MCF 10A (cell line): ENCODE measurements at regions of chr21 and their contacts with region 1.

Region 1: DNA sequence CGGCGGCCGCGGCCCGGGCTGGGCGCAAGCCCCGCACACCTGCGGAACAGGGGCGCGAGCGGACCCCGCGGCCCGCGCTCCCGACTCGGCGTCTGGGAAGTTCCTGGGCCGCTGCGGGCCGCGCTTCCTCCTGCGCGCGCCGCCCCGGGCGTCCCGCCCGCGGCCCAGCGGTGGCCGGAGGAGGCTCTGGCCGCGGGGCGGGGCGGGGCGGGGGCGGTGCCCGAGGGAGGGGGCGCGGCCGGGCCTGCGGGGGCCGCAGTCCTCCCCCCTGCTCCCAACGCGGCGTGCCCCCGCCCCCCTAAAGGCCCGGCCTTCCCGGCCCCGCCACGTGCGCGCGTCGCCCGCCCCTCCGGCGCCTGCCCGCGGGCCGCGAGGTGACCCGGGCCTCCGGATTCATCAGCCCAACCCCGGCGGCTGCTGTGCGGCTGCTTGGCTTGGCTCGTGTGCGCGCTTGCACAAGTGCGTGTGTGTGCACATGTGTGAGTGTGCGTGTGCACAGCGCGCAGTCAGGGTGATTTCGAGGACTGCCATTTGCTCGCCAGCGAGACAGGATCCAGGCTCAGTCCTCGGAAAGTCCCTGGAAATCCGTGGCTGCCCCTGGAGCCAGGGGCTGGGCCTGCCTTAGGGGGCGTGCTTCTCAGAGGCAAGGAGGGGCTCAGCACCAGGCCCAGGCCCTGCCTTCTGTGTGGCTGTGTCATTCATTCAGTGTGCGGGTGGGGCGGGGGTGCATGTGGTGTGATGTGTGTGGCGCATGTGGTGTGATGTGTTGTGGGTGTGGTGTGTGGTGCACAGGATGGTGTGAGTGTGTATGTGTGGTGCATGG is at the start of gene C2CD2:
- DNase-seq: peak; percentile 56
- H3K4me3 Mint-ChIP-seq: peak within 1 kb of the TSS; percentile 75
- H3K27ac Mint-ChIP-seq: peak within 1 kb of the TSS; percentile 36
- H3K4me1 Mint-ChIP-seq: peaks cover 27% of the 10 kb centered on the region
- H3K27me3 Mint-ChIP-seq: no peaks in the 10 kb centered on the region
- CTCF ChIP-seq: no peak
- total RNA-seq, gene C2CD2: 25.0 and 25.1 TPM in 2 replicates

Region 2: DNA sequence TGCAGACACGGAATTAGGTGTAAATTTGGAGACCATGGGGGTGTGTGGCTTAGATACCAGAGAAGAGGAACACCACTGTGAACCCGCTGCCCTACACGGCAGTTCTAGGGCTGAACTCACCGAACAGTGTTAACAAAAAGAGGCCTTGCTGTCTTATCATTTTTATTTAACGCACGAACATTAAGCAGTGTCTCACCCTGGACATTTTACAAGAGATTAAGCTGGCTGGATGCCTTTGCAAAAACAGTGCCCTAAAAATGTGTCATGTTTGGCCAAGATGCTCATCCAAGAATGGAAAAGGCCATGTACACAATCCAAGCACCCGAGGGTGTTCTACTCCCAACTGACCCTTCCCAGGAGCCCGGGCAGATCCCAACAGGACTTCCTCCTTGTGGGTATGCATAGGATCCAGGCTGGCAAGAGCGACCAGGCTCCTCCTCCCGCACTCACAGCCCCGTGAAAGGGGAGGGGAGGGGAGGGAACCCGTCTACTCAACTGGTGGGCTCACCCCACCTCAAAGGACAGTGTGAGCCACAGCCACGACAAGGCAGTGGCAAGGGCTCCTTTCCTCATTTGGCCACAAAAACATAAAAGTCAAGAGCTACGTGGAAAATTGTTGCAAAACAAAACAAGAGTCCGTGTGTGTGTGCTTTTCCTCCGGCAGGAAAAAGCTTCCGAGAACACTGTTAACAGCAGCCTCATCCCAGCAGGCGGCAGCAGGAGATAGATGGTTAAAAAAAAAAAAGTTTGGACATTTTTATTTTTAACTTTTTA is 20.5 kb before region 1 on chr21:
- CTCF ChIA-PET with region 1: interaction called, 6 read pairs
- POLR2A ChIA-PET with region 1: interaction called, 14 read pairs
- intact Hi-C with region 1: loop called (anchors 2 kb)
- DNase-seq: peak; percentile 74
- H3K4me3 Mint-ChIP-seq: no peak overlapping the region
- H3K27ac Mint-ChIP-seq: peak overlapping the region; percentile 84
- H3K4me1 Mint-ChIP-seq: peaks cover 36% of the 10 kb centered on the region
- H3K27me3 Mint-ChIP-seq: no peaks in the 10 kb centered on the region
- CTCF ChIP-seq: no peak

Region 3: DNA sequence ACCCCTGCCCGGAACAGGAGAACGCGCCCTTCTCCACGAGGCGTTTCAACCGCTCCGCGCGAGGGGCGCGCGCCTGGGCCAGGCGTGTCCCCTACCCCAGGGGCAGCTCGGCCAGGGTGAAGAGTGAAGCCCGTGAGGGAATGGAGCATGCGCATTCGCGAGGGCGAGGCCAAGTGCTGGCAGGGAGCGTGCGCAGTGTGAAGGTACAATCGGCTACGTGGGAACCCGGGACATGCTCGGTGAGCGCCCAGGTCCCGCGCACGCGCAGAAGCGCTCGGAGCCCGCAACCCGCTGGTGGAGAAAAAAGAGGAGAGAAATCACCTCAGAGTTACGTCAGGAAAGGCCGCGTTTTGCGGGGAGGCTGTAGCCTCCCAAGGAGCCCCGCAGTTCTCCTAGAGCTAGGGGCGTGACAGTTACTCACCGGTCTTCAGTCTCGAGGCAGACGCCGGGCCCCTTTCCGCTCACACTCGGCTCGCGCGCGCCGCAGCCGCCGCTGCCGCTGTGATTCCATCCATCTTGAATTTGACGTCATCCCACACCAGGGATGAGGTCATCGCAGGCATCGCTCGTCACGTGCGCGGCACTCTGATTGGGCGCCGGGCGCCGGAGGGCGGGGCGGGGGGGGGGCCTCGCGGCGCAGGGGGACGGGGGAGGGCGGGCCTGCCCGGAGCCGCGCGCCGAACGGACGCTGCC is 55.9 kb after region 1 on chr21 and contains the start of gene ZBTB21:
- CTCF ChIA-PET with region 1: no interaction called
- POLR2A ChIA-PET with region 1: interaction called, 10 read pairs
- intact Hi-C with region 1: loop called (anchors 2 kb)
- DNase-seq: peak; percentile 98
- H3K4me3 Mint-ChIP-seq: peak within 1 kb of the TSS; percentile 78
- H3K27ac Mint-ChIP-seq: peak within 1 kb of the TSS; percentile 95
- H3K4me1 Mint-ChIP-seq: peaks cover 18% of the 10 kb centered on the region
- H3K27me3 Mint-ChIP-seq: no peaks in the 10 kb centered on the region
- CTCF ChIP-seq: no peak
- total RNA-seq, gene ZBTB21: 21.5 and 27.3 TPM in 2 replicates

Region 4: DNA sequence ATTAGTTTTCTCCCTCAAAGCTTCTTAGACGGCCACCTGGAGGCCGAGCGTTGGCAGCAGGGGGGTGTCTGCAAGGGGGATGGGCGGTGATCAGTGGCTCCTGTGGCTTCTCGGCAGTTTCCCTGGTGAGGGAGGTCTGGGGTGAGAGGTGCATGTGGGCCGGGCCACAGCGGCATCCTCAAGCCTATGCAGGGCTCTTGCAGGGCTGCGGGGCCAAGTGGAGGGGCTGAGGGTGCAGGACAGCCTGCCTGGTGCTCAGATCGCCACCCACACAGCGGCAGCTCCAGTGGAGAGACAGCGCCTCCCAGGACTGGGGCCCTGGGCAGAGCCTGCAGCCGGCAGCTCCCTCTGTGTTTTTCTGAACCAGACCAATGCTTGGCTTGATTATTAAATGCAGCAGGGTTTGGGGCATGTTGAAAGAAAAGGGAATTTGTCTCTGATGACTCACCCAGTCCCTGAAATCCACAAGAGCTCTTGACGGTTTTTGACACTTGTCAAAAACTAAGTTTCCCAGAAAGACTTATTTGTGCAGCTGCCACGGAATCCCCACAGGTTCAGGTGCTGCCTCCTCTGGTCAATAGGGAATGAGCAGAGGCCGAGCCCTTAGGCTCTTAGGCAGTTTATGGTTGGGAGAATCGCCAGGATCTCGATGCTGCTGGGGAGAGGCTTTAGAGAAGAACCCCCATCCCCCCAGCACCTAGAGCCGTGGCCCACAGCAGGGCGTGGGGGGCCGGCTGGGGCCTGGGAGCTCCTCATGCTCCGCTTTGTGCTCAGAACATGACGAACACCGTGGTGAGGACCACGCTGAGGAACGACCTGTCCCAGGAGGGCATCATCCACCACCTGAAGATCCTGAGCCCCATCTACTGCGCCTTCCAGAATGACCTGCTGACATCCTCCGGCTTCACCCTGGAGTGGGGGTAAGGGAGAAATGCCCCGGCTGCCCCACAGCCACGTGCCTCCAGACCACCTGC is 171.8 kb after region 1 on chr21:
- CTCF ChIA-PET with region 1: no interaction called
- POLR2A ChIA-PET with region 1: no interaction called
- intact Hi-C with region 1: no loop called
- DNase-seq: peak; percentile 72
- H3K4me3 Mint-ChIP-seq: no peak overlapping the region
- H3K27ac Mint-ChIP-seq: no peak overlapping the region
- H3K4me1 Mint-ChIP-seq: peaks cover 11% of the 10 kb centered on the region
- H3K27me3 Mint-ChIP-seq: peaks cover 11% of the 10 kb centered on the region
- CTCF ChIP-seq: peak; percentile 6